ENCODE measurements at regions of chr7 and their contacts with region 1.

Region 1: DNA sequence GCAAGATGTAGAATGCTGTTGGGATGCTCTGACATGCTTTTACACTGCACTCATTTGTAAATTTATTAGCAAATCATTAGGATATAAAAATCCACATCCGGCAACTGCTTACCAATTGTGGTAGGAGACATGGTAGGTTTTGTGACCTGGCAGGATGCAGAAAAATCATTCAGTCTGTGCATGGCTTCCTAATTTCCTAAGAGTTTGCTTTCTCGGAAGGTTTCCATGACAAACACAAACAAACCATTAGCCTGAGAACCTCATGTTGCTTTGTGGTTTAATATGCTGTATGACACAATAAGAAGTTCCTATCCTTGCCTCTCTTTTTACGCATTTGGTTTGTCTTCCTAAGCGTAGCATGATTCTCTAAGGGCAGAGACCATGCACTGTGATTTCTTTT is 14.7 kb upstream of the LMBR1 start:
- DNase-seq: no peak
- ATAC-seq: peak in 2 of 8 donors; percentile 26 to 33
- H3K4me3 ChIP-seq: no peak overlapping the region
- H3K27ac ChIP-seq: no peak overlapping the region
- H3K4me1 ChIP-seq: peaks cover 0 to 21% (median 6%) of the 10 kb centered on the region in 9 donors
- H3K27me3 ChIP-seq: peaks cover 0 to 8% (median 0%) of the 10 kb centered on the region in 7 donors
- CTCF ChIP-seq: no peak

Region 2: GRCh38 chr7:156949541-156950380 is 42.1 kb after region 1 on chr7 and contains the start of gene NOM1:
- intact Hi-C with region 1: loop called in 1 of 10 experiments (anchors 5 kb)
- DNase-seq: peak; percentile 92 to 93
- ATAC-seq: peak; percentile 95 to 99 (median 98)
- H3K4me3 ChIP-seq: peak within 1 kb of the TSS; percentile 70 to 100 (median 98)
- H3K27ac ChIP-seq: peak within 1 kb of the TSS; percentile 31 to 88 (median 74)
- H3K4me1 ChIP-seq: peaks cover 4 to 33% (median 23%) of the 10 kb centered on the region in 9 donors
- H3K27me3 ChIP-seq: peaks cover 0 to 19% (median 10%) of the 10 kb centered on the region in 7 donors
- CTCF ChIP-seq: peak; percentile 64 to 99 (median 81)
- total RNA-seq, gene NOM1: 6.6 to 13.6 (median 8.9) TPM

Region 3: GRCh38 chr7:157078081-157078611 is 170.5 kb after region 1 on chr7:
- intact Hi-C with region 1: no loop called
- DNase-seq: no peak
- ATAC-seq: no peak
- H3K4me3 ChIP-seq: peak overlapping the region in 1 of 10 donors; percentile 5
- H3K27ac ChIP-seq: no peak overlapping the region
- H3K4me1 ChIP-seq: peaks cover 0 to 4% (median 0%) of the 10 kb centered on the region in 9 donors
- H3K27me3 ChIP-seq: peaks cover 0 to 87% (median 63%) of the 10 kb centered on the region in 7 donors
- CTCF ChIP-seq: no peak

Measured in heart right ventricle (tissue), 16 donors.